ENCODE measurements at regions of chr6 and their contacts with region 1.

Region 1: DNA sequence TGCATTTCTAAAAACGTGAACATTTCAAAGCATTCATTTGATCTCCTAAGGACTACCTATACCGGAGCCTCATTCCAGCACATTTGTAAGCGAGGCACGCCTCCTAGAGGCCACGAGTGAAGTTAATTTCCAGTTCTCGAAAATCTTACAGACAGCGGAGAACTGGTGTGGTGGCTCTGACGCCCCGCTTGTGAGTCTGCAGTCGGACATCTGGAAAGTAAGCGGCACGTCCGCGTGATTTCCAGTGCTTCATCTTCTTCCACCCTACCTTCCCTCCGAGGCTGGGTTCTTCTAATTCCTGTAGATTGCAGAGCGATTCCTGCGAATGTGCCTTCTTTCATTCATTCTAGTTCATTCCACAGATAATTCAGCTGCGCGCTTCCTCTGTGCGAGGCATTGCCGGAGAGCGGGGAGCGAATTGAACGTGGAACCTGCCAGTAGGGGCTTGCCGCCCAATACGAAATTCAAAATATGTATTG is 810 bp upstream of the PRIM2 start:
- DNase-seq: peak; percentile 71 to 90
- ATAC-seq: peak; percentile 82 to 91
- H3K4me3 ChIP-seq: peak overlapping the region; percentile 66
- H3K27ac ChIP-seq: peak overlapping the region; percentile 80 to 86
- H3K4me1 ChIP-seq: peaks cover 35% of the 10 kb centered on the region
- CTCF ChIP-seq: peak; percentile 83
- EP300 ChIP-seq: no peak
- POLR2A ChIP-seq: 0 out of 2 replicates have a peak, but pooled peaks have one; percentile 18
- RAD21 ChIP-seq: peak; percentile 92 to 95

Region 2: DNA sequence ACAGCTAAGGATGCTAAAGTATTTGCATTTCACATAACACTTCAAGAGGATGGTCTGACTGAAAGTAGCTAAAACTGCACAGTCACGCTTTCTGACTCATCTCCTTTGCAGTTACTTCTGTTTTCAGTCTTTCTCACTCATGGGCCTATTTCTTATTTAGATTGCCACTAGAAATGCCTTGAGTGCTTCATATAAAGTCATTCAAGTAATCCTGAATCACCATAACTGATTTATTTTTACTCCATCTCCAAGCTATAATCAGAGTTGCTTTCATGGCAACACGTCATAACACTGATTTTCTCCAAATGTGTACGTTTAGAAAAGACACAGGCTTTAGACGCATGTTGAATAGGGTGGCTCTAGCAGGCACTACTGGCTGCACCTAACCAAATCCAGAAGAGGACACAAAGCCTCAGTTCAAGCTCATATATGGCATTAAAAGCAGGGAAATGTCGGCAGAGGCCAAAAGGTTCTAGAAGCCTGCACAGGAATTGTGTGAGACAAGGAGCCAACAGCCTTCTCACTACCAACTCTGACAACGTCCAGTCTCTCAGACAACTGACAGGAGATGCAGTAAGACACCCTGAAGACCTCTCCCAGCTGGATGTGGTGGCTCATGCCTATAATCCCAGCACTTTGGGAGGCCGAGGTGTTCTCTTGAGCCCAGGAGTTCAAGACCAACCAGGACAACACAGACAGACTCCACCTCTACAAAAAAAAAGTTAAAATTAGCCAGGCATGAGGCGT is 425.8 kb before region 1 on chr6:
- CTCF ChIA-PET with region 1: interaction called, 17 read pairs
- POLR2A ChIA-PET with region 1: no interaction called
- DNase-seq: peak; percentile 58 to 80
- ATAC-seq: peak; percentile 79 to 87
- H3K4me3 ChIP-seq: no peak overlapping the region
- H3K27ac ChIP-seq: peak overlapping the region; percentile 98 to 99
- H3K4me1 ChIP-seq: peaks cover 46% of the 10 kb centered on the region
- CTCF ChIP-seq: no peak
- EP300 ChIP-seq: no peak; a peak in 1 of 5 replicates
- POLR2A ChIP-seq: no peak
- RAD21 ChIP-seq: no peak

Region 3: GRCh38 chr6:56955171-56956045 is 361.2 kb before region 1 on chr6:
- CTCF ChIA-PET with region 1: interaction called, 17 read pairs
- POLR2A ChIA-PET with region 1: interaction called, 4 read pairs
- DNase-seq: peak; percentile 67 to 90
- ATAC-seq: peak; percentile 81 to 90
- H3K4me3 ChIP-seq: peak overlapping the region; percentile 89
- H3K27ac ChIP-seq: peak overlapping the region; percentile 95 to 97
- H3K4me1 ChIP-seq: peaks cover 46% of the 10 kb centered on the region
- CTCF ChIP-seq: peak; percentile 81
- EP300 ChIP-seq: no peak
- POLR2A ChIP-seq: peak; percentile 15; the same call in 1 of the 2 replicates
- RAD21 ChIP-seq: peak; percentile 63 to 73

Region 4: GRCh38 chr6:57190140-57190539 is 126.5 kb before region 1 on chr6:
- CTCF ChIA-PET with region 1: interaction called, 44 read pairs
- POLR2A ChIA-PET with region 1: interaction called, 3 read pairs
- DNase-seq: peak in 1 of 2 experiments; percentile 22
- ATAC-seq: peak in 1 of 2 experiments; percentile 62; a peak in 3 of 6 replicates
- H3K4me3 ChIP-seq: no peak overlapping the region
- H3K27ac ChIP-seq: no peak overlapping the region
- H3K4me1 ChIP-seq: no peaks in the 10 kb centered on the region
- CTCF ChIP-seq: peak; percentile 48
- EP300 ChIP-seq: no peak
- POLR2A ChIP-seq: no peak
- RAD21 ChIP-seq: peak; percentile 36 to 37; a peak in 3 of 5 replicates

Region 5: GRCh38 chr6:57252975-57253374 is 63.6 kb before region 1 on chr6:
- CTCF ChIA-PET with region 1: interaction called, 10 read pairs
- POLR2A ChIA-PET with region 1: no interaction called
- DNase-seq: no peak
- ATAC-seq: no peak
- H3K4me3 ChIP-seq: no peak overlapping the region
- H3K27ac ChIP-seq: no peak overlapping the region
- H3K4me1 ChIP-seq: peaks cover 11% of the 10 kb centered on the region; the same call in 1 of the 3 replicates
- CTCF ChIP-seq: no peak
- EP300 ChIP-seq: no peak
- POLR2A ChIP-seq: no peak
- RAD21 ChIP-seq: no peak

Measured in A549 (cell line).